ENCODE measurements at regions of chr14 and their contacts with region 1.

Region 1: DNA sequence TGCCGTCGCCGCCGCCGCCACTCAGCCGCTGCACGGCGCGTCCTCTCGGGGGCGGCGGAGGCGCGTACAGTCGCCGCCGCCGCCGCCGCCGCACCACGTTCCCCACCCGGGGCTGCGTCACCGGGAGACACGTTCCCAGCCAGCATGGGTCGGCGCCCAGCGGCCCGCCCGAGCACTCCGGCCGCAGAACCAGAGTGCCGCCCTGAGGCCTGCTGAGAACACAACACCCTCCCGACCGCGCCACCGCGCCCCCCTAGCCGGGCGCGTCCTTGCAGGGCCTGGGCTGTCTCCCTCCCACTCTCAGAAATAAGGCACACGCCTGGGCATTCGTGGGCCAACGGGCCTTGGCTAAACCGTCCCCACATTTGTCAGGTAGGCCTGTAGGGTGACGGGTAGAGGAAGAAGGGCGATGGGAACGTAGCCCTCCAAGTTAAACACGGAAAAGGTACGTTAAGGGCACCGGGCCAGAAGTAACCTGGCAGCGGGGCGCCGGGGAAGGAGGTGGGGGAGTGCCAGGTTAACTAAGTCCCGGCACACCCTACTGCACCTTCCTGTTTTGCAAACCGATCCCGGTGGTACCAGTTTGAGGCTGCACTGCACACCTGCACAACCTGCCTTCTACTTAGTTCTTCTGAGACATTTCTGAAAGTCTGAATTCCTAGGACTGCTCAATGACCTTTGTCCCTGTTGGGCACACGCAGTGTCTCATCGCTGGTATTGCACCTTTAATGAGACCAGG is at the start of gene MAP4K5:
- DNase-seq: peak; percentile 91 to 96 (median 93)
- ATAC-seq: peak; percentile 97 to 100 (median 100)
- H3K4me3 ChIP-seq: peak within 1 kb of the TSS; percentile 72 to 98 (median 90)
- H3K27ac ChIP-seq: peak within 1 kb of the TSS; percentile 78 to 98 (median 94)
- H3K4me1 ChIP-seq: peaks cover 5 to 44% (median 25%) of the 10 kb centered on the region in 12 donors
- H3K27me3 ChIP-seq: no peaks in the 10 kb centered on the region
- CTCF ChIP-seq: peak; percentile 79 to 96 (median 93)
- POLR2A ChIP-seq: peak in 1 of 2 donors; percentile 85
- total RNA-seq, gene MAP4K5: 9.0 to 43.3 (median 16.6) TPM

Region 2: DNA sequence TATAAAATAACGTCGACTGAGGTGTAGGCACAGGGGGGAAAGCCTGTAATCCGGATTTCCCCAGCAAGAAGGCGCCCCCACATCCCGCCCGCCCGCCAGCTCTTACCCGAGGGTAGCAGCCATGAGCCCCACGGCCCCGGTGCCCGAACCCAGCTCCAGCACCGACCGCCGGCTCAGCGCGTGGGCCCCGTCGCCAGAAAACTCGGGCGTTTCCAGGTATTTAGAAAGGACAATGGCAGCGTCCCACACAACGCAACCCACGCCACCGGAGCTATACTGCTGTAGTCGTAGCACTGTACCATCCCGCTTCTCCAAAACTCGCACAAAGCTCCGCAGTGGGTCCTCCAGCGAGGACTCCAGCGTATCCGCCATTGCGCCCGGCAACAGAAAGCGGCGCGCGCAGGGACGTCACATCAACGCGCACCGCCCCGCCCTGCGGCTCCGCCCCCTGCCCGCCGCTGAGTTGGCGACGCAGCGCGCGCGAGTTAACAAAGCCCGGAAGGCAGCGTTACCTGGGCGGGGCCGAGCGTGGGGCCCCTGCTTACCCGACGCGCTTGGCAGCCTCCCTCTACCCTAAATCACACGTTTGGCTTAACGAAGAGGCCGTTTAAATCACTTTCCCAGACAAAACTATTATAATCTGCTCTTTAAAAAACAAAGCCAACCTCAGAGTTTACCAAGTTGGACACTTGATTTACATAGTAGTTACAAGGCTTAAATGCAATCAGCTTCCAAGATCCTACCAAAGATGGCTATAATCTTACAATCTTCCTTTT is 416.3 kb before region 1 on chr14 and contains the start of gene VCPKMT:
- intact Hi-C with region 1: loop called in 1 of 10 experiments (anchors 5 kb)
- DNase-seq: peak; percentile 94 to 97 (median 95)
- ATAC-seq: peak; percentile 97 to 100 (median 100)
- H3K4me3 ChIP-seq: peak within 1 kb of the TSS; percentile 68 to 87 (median 72)
- H3K27ac ChIP-seq: peak within 1 kb of the TSS; percentile 66 to 90 (median 82)
- H3K4me1 ChIP-seq: peaks cover 0 to 22% (median 14%) of the 10 kb centered on the region in 12 donors
- H3K27me3 ChIP-seq: no peaks in the 10 kb centered on the region
- CTCF ChIP-seq: peak in 1 of 12 donors; percentile 8
- POLR2A ChIP-seq: peak; percentile 11 to 89
- total RNA-seq, gene VCPKMT: 0.95 to 4.9 (median 2.9) TPM

Region 3: GRCh38 chr14:50321009-50321660 is 211.5 kb before region 1 on chr14:
- intact Hi-C with region 1: loop called (anchors 1 to 5 kb)
- DNase-seq: peak in 3 of 5 donors; percentile 49 to 66 (median 63)
- ATAC-seq: peak; percentile 88 to 97 (median 96)
- H3K4me3 ChIP-seq: peak overlapping the region in 9 of 12 donors; percentile 15 to 49 (median 33)
- H3K27ac ChIP-seq: peak overlapping the region; percentile 10 to 77 (median 56)
- H3K4me1 ChIP-seq: peaks cover 0 to 28% (median 8%) of the 10 kb centered on the region in 12 donors
- H3K27me3 ChIP-seq: no peaks in the 10 kb centered on the region
- CTCF ChIP-seq: peak; percentile 74 to 95 (median 86)
- POLR2A ChIP-seq: no peak

Region 4: GRCh38 chr14:50342221-50343078 is 190.2 kb before region 1 on chr14:
- intact Hi-C with region 1: loop called in 4 of 10 experiments (anchors 5 kb)
- DNase-seq: peak; percentile 58 to 64 (median 62)
- ATAC-seq: peak; percentile 85 to 95 (median 93)
- H3K4me3 ChIP-seq: peak overlapping the region in 9 of 12 donors; percentile 3 to 38 (median 26)
- H3K27ac ChIP-seq: peak overlapping the region; percentile 18 to 77 (median 49)
- H3K4me1 ChIP-seq: peaks cover 0 to 38% (median 22%) of the 10 kb centered on the region in 12 donors
- H3K27me3 ChIP-seq: no peaks in the 10 kb centered on the region
- CTCF ChIP-seq: peak in 11 of 12 donors; percentile 19 to 64 (median 38)
- POLR2A ChIP-seq: no peak

Region 5: DNA sequence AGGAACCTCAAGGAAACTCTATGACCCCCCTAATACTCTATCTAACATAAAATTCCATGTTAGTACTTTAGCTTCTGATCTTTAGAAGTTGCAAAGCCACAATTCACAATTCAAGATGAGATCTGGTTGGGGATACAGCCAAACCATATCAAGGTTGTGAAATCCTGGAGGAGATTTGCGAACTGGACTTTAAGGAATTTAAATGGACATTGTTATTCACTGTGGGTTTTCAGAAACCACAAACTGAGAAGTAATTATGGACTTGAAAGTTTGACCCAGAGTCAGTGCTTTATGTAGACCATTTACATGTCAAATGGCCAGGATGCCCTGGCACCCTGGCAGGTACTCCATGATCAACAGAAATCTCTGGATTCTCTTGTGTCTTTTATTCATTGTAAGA is 121.8 kb before region 1 on chr14:
- intact Hi-C with region 1: no loop called
- DNase-seq: no peak
- ATAC-seq: no peak
- H3K4me3 ChIP-seq: no peak overlapping the region
- H3K27ac ChIP-seq: no peak overlapping the region
- H3K4me1 ChIP-seq: peaks cover 0 to 14% (median 2%) of the 10 kb centered on the region in 12 donors
- H3K27me3 ChIP-seq: no peaks in the 10 kb centered on the region
- CTCF ChIP-seq: no peak
- POLR2A ChIP-seq: no peak

Region 6: DNA sequence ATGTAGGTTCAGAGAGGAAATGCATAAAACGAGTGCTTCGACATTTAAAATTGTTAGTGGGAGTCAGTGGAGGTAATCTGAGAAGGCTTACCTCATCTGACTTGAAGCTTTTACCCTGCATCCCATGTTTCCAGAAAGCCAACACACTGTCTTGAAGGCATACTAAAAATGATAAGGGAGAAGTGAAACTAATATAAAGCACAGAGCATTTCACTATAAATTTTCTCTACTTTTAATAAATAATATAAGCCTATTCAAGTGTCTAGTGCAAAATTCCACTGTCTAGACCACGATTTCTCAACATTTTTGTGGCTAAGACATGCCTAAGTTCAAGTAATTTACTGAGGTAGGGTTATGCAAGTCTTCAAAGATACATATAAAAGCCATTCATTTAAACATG is 106.9 kb before region 1 on chr14:
- intact Hi-C with region 1: no loop called
- DNase-seq: no peak
- ATAC-seq: no peak
- H3K4me3 ChIP-seq: no peak overlapping the region
- H3K27ac ChIP-seq: no peak overlapping the region
- H3K4me1 ChIP-seq: no peaks in the 10 kb centered on the region
- H3K27me3 ChIP-seq: no peaks in the 10 kb centered on the region
- CTCF ChIP-seq: no peak
- POLR2A ChIP-seq: no peak

Measured in heart left ventricle (tissue), 16 donors.